Activated CD4-positive, alpha-beta memory T cell treated with anti-CD3 and anti-CD28 coated beads, Interleukin-2, amount 10 ng/mL, durations not matched to agents 7 days and 5 days (primary cell): ENCODE measurements at regions of chr11 and their contacts with region 1.

Region 1: GRCh38 chr11:71977743-71978418 is 20.8 kb upstream of the IL18BP start:
- DNase-seq: peak; percentile 67
- H3K4me3 Mint-ChIP-seq: no peak overlapping the region
- H3K27ac Mint-ChIP-seq: peak overlapping the region; percentile 37
- H3K4me1 Mint-ChIP-seq: no peaks in the 10 kb centered on the region
- H3K27me3 Mint-ChIP-seq: no peaks in the 10 kb centered on the region

Region 2: DNA sequence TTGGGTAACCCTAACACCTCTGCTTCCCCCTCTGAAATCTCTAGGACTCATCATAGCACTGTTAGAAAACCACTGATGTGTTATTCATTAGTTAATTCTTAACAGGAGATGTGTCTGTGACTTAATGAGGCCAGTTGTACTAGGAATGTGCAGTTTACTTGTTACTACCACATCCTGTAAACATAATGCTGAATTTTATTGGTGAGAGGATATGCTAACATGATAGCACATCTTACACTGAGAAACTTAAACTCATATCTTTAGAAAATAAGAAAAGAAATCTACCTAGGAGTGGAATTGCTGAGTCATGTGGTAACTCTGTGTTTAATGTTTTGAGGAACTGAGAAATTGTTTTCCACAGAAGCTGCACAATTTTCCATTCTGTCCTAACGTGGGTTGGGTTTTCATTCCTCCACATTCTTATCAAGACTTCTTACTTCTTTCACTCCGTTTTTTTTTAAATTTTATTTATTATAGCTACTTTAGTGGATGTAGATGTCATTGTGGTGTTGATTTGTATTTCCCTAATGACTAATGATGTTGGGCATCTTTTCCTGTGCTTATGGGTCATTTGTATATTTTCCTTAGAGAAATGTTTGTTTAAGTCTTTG is 15.3 kb before region 1 on chr11:
- CTCF ChIA-PET with region 1: interaction called, 17 read pairs
- POLR2A ChIA-PET with region 1: no interaction called
- DNase-seq: no peak
- H3K4me3 Mint-ChIP-seq: no peak overlapping the region
- H3K27ac Mint-ChIP-seq: peak overlapping the region; percentile 64
- H3K4me1 Mint-ChIP-seq: peaks cover 13% of the 10 kb centered on the region
- H3K27me3 Mint-ChIP-seq: no peaks in the 10 kb centered on the region

Region 3: GRCh38 chr11:71998662-71999310 is 20.9 kb after region 1 on chr11 and contains the start of gene IL18BP:
- CTCF ChIA-PET with region 1: interaction called, 11 read pairs
- POLR2A ChIA-PET with region 1: interaction called, 4 read pairs
- DNase-seq: peak; percentile 59
- H3K4me3 Mint-ChIP-seq: peak within 1 kb of the TSS; percentile 70
- H3K27ac Mint-ChIP-seq: peak within 1 kb of the TSS; percentile 85
- H3K4me1 Mint-ChIP-seq: peaks cover 23% of the 10 kb centered on the region
- H3K27me3 Mint-ChIP-seq: no peaks in the 10 kb centered on the region
- total RNA-seq, gene IL18BP: 12.4 to 14.0 TPM

Region 4: GRCh38 chr11:72024069-72024754 is 46.3 kb after region 1 on chr11:
- CTCF ChIA-PET with region 1: interaction called, 27 read pairs
- POLR2A ChIA-PET with region 1: interaction called, 3 read pairs
- DNase-seq: no peak
- H3K4me3 Mint-ChIP-seq: no peak overlapping the region
- H3K27ac Mint-ChIP-seq: no peak overlapping the region
- H3K4me1 Mint-ChIP-seq: peaks cover 17% of the 10 kb centered on the region
- H3K27me3 Mint-ChIP-seq: no peaks in the 10 kb centered on the region

Region 5: DNA sequence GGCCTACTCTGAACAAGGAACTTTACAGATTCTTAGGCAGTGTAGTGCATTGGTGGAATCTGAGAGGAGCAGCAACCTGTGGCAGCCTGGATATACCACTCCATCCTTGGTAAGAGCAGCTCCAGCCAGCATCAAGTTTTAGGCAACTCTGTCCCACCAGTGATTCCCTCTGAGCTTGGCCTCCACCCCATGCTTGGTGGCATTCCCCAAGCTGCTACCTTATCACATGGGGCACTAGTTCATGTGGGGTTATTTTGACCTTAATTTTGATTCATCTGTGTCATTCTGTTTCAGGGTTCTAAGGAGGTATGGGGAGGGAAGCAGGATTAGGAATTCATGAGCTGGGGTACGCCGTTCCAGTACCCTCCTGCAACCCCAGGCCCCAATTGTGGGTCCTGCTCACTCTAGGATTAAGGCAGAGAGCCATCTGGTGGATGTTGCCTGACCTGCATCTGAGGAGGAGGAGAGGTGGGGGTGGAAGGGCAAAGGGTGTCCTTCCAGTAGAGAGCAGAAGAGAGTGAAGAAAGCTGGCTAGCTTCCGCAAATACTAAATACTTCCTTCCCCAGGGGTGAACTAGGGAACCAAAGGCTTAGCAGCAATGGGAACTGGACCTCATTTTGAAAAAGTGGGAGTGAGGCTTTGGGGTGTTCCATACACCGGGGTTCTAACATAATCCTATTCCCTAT is 113.3 kb after region 1 on chr11:
- CTCF ChIA-PET with region 1: interaction called, 21 read pairs
- POLR2A ChIA-PET with region 1: interaction called, 3 read pairs
- DNase-seq: peak; percentile 66
- H3K4me3 Mint-ChIP-seq: no peak overlapping the region
- H3K27ac Mint-ChIP-seq: no peak overlapping the region
- H3K4me1 Mint-ChIP-seq: peaks cover 18% of the 10 kb centered on the region
- H3K27me3 Mint-ChIP-seq: no peaks in the 10 kb centered on the region

Region 6: DNA sequence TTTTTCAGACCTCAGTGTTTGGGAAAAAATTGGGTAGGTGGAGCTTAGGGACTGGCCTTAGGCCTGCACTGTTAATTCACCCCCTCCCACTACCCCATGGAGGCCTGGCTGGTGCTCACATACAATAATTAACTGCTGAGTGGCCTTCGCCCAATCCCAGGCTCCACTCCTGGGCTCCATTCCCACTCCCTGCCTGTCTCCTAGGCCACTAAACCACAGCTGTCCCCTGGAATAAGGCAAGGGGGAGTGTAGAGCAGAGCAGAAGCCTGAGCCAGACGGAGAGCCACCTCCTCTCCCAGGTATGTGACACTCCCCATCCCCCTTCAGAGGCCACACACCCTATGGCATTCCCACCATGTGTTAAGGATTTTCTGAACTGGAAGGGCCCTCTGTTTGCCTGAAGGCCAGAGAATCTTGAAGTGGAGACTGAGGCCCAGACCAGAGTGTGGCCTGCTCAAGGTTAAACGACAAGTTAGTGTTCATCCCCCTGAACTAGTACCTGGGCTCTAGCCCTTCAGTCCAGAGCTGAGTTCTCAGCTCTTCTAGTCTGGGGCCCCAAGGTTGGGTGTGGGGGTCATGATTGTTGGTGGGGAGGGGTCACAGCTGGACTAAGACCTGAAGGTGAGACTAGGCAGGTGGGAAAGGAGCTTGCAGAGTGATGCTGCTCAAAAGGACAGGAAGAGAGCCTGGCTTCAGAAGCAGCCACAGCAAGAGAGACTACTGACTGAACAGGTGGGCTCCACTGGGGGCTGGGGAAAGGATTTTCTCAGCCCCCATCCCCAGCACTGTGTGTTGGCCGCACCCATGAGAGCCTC is 211.8 kb after region 1 on chr11:
- CTCF ChIA-PET with region 1: interaction called, 10 read pairs
- POLR2A ChIA-PET with region 1: no interaction called
- DNase-seq: no peak
- H3K4me3 Mint-ChIP-seq: no peak overlapping the region
- H3K27ac Mint-ChIP-seq: no peak overlapping the region
- H3K4me1 Mint-ChIP-seq: no peaks in the 10 kb centered on the region
- H3K27me3 Mint-ChIP-seq: no peaks in the 10 kb centered on the region